IMR-90 (cell line): ENCODE measurements at regions of chr10 and their contacts with region 1.

Region 1: DNA sequence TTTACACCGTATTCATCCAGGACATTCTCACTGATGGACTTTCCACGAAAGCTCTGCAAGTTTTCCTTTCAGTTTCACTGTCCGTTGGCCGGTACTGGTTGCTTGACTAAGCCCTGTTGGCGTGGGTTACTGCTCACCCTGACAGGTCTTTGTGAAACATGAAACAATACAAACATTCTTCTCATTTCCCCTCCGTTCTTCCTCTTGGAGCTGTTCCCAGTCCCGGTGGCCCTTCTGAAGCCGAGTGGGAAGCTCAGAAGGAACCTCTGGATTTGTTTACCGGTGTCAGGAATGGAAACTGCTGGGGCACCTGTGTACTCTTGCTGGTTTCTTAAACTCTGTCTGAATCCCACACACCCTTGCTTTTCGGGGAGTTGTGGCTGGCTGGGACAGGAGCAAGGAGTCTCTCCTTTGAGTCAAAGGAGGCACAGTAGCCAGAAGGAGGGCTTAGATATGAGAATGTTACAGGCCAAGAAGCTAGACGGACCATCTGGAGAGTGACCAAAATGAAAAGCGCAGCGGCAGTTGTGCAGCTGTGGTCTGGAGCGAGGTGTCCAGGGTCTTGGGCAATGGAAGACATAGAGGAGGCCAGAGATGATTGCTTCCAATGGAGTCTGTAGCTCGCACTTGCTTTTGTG is 45.7 kb downstream of the LYZL2 start:
- DNase-seq: peak; percentile 77
- ATAC-seq: peak; percentile 88
- H3K4me3 ChIP-seq: peak overlapping the region; percentile 28; the same call in 1 of the 2 replicates
- H3K27ac ChIP-seq: no peak overlapping the region
- H3K4me1 ChIP-seq: peaks cover 2% of the 10 kb centered on the region; the same call in 1 of the 2 replicates
- H3K27me3 ChIP-seq: peaks cover 14% of the 10 kb centered on the region
- CTCF ChIP-seq: no peak
- POLR2A ChIP-seq: no peak
- RAD21 ChIP-seq: no peak

Region 2: DNA sequence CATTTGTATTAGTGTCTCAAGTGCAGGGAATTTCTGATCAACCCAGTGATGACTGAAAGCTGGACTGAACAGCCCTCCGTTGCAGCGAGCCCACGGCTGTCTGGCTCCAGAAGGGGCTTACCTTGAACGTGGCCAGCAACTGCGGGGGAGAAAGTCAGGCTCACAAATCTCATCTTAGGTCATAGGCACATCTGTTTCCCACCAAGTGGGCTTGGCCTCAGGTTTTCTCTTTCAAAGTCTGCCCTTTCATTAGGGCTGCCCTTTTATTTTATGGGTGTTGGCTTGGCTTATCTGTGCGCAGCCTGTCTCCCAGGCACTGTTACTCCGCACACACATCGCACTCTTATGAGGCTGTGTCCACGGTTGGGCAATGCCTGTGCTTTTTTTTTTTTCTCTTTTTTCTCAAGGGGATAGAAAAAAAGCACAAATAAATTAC is 702.5 kb before region 1 on chr10:
- CTCF ChIA-PET with region 1: no interaction called
- POLR2A ChIA-PET with region 1: no interaction called
- dilution Hi-C with region 1: no loop called
- in situ Hi-C with region 1: no loop called
- intact Hi-C with region 1: no loop called
- DNase-seq: no peak
- ATAC-seq: no peak
- H3K4me3 ChIP-seq: no peak overlapping the region
- H3K27ac ChIP-seq: no peak overlapping the region
- H3K4me1 ChIP-seq: no peaks in the 10 kb centered on the region
- H3K27me3 ChIP-seq: peaks cover 19% of the 10 kb centered on the region
- CTCF ChIP-seq: no peak
- POLR2A ChIP-seq: no peak
- RAD21 ChIP-seq: no peak

Region 3: GRCh38 chr10:30565449-30565848 is 18.4 kb before region 1 on chr10:
- CTCF ChIA-PET with region 1: interaction called, 10 read pairs
- POLR2A ChIA-PET with region 1: no interaction called
- dilution Hi-C with region 1: no loop called
- in situ Hi-C with region 1: no loop called
- intact Hi-C with region 1: no loop called
- DNase-seq: no peak
- ATAC-seq: no peak
- H3K4me3 ChIP-seq: no peak overlapping the region
- H3K27ac ChIP-seq: no peak overlapping the region
- H3K4me1 ChIP-seq: no peaks in the 10 kb centered on the region
- H3K27me3 ChIP-seq: peaks cover 22% of the 10 kb centered on the region
- CTCF ChIP-seq: no peak
- POLR2A ChIP-seq: no peak
- RAD21 ChIP-seq: no peak